IMR-90 (cell line): ENCODE measurements at regions of chr22 and their contacts with region 1.

Region 1: DNA sequence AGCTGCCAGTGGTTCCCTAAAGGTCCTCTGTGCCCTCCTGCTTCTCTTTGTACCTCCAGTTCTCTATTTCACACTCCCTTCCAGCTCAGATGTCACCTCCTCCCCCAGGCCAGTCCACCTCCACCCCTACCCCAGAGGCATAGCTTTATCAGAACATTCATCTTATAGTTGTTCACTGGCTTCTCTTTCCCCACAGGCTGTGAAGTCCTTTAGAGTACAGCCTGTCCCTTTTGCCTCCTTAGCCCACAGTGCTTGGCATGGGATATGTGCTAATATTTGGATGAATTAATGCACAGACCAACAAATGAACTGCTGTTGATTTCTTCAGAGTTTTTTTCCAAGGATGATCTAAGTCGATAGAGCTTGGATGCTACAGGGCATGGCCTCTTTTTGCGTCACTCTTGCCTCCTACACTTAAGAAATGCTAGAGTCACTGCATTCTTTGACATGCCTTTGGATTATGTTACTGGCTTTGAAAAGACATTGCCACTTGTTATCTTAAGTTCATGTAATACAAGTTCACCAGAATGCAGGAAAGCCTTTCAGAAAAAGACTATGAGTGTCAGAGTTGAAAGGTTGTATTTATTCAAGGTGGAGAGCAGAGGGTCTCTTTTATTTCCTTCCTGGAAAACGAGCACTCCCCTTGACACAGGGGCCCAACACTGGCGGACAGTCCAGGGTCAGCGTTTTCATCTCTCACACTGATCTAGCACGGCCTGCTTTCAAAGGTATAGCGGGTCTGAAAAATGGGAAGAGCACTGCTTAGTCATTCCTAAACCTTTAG is 75.7 kb downstream of the PISD start:
- DNase-seq: peak; percentile 87
- ATAC-seq: peak; percentile 66
- H3K4me3 ChIP-seq: no peak overlapping the region
- H3K27ac ChIP-seq: peak overlapping the region; percentile 96
- H3K4me1 ChIP-seq: peaks cover 22% of the 10 kb centered on the region
- H3K27me3 ChIP-seq: no peaks in the 10 kb centered on the region
- CTCF ChIP-seq: no peak
- POLR2A ChIP-seq: no peak
- RAD21 ChIP-seq: no peak

Region 2: DNA sequence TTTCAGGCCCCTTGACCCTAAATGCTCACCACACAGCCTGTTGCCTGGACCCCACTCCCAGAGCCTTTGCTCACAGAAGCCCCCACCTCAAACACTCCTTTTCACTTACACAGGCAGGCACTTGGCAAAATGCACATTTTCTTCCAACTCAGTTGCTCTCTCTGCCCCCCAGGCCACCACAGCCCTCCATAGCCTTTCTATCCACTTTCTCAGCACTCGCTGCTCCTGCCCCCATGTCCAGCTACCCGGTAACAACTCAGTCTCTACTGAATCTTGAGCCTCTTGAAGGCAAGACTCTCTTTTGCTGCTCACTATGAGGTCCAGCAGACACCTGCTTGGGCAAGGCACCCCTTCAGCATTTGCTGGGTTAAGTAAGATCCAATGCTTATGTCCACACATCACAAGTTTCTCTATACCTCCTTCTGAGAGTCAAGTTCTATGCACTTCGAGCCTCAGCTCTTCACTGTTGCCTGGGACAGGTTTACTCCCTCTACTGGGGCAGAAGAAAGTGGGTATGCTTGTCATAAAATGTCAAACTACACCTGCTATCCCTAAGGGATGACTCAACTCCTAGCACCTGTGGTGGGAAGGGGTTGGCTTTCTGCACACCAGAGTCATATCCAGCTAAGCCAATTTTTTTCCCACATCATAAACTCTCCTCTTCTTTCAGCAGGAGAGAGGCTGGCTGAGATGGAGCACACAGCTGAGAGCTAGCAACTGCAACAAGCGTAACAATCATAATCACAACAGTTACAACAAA is 654.6 kb before region 1 on chr22:
- CTCF ChIA-PET with region 1: no interaction called
- POLR2A ChIA-PET with region 1: no interaction called
- dilution Hi-C with region 1: no loop called
- in situ Hi-C with region 1: no loop called
- intact Hi-C with region 1: no loop called
- DNase-seq: no peak
- ATAC-seq: no peak
- H3K4me3 ChIP-seq: no peak overlapping the region
- H3K27ac ChIP-seq: no peak overlapping the region
- H3K4me1 ChIP-seq: no peaks in the 10 kb centered on the region
- H3K27me3 ChIP-seq: no peaks in the 10 kb centered on the region
- CTCF ChIP-seq: no peak
- POLR2A ChIP-seq: no peak
- RAD21 ChIP-seq: no peak

Region 3: DNA sequence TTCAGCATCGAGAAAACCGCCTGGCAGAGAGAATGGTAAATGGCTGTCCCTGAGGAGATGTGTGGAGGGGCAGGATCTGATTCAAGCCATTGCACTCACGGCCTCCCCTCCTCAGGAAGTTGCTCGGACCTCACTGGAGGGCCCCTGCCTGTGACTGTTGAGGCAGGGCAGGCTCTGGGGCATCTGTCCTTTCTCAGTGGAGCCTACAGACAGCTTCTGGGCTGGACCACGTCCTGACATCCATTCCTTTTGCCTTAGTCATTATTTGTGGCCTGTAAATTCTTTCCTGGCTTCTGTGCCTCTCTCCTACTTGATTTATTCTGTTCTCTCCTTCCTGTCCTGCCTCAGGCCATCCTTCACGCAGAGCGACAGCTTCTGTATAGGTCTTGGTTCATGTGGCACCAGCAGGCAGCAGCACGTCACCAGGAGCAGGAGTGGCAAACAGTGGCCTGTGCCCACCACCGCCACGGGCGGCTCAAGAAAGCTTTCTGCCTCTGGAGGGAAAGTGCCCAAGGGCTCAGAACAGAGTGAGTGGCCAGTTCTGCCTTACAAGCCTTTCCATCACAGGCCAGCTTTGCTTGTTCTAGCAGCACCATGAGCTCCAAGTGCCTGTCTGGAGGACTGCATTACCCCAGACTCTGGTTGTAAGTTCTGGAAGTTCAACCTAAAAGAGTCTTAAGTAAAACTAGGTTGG is 16.1 kb after region 1 on chr22:
- CTCF ChIA-PET with region 1: no interaction called
- POLR2A ChIA-PET with region 1: interaction called, 3 read pairs
- dilution Hi-C with region 1: no loop called
- in situ Hi-C with region 1: no loop called
- intact Hi-C with region 1: loop called (anchors 1 kb)
- DNase-seq: peak; percentile 91
- ATAC-seq: peak; percentile 95
- H3K4me3 ChIP-seq: no peak overlapping the region
- H3K27ac ChIP-seq: peak overlapping the region; percentile 82
- H3K4me1 ChIP-seq: peaks cover 8% of the 10 kb centered on the region
- H3K27me3 ChIP-seq: no peaks in the 10 kb centered on the region
- CTCF ChIP-seq: no peak
- POLR2A ChIP-seq: no peak
- RAD21 ChIP-seq: no peak

Region 4: DNA sequence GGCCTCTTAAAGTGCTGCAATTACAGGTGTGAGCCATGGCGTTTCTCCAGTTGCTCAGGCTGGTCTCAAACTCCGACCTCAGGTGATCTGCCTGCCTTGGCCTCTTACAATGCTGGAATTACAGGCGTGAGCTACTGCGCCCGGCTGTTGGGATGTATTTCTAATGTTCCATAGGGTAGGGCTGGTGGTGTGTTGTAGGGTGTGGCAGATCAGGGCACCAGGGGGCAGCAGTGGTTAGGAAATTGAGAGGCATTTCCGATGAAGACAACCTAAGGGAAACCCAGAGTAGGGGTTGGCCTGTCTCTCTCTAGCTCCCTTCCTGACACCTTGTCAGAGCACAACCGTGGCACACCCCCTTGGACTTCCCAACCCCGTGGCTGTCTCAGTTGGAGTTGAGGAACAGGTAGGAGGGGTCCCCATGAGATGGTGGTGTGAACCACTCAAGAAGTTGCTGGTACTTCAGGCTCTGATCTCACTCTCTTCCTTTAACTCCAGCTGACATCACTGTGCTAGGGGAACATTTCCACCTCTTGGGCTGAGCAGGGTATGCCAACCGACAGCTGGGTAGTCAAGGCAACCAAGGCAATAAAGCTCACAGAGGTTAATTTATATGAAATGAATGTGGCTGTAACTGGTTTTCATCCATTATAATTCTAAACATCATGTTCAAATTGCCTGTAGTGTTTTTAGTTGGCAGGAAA is 391.0 kb after region 1 on chr22:
- CTCF ChIA-PET with region 1: no interaction called
- POLR2A ChIA-PET with region 1: no interaction called
- dilution Hi-C with region 1: no loop called
- in situ Hi-C with region 1: no loop called
- intact Hi-C with region 1: no loop called
- DNase-seq: peak; percentile 54
- ATAC-seq: peak; percentile 95
- H3K4me3 ChIP-seq: no peak overlapping the region
- H3K27ac ChIP-seq: no peak overlapping the region
- H3K4me1 ChIP-seq: no peaks in the 10 kb centered on the region
- H3K27me3 ChIP-seq: peaks cover 2% of the 10 kb centered on the region; the same call in 1 of the 2 replicates
- CTCF ChIP-seq: peak; percentile 78
- POLR2A ChIP-seq: 0 out of 2 replicates have a peak, but pooled peaks have one; percentile 38
- RAD21 ChIP-seq: peak; percentile 88